WTC11 (cell line): ENCODE measurements at regions of chr1 and their contacts with region 1.

Region 1: DNA sequence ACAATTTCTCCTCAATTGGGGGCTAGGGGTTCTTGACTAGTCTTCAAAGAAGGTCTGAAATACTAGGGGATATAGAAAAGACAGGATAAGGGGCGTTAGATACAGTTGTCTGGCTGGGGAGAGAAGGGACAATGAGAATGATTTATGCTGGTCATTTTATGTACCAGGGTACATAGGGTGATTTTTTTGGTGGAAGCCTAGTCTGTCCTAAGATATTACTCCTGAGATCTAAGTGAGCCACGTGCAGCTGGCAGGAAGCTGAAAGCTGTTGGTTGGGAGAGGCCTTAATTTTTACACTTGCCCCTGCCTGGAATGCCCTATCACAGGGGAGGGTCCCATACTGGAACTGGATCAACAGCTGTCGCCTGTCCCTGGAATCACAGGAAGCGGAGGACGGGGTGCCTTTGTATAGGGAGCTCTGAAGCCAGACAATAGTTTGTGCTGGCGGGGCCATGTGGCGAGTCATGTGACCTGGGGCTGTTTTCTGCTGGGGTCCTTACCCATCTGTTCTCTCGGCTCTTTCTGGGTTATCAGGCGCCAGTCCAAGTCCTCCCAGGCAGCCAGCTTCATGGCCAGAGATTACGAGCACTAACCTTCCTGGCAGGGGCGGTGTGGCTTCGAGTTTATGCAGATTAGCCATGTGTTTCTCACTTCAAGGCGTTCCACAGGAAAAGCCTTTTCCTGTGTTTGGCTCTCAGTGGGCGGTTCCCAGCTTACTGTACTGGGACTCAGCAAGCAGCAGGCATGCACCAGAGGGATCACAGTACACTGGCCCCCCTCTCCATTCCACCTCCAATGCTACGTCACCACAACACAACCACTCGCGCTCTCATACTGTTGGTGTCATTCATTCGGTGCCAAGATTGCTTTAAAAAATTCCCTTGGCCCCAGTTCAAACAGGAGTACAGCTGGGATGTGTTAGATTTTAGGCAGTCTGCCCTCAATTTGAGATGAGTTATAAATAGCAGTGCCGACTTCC is 27.5 kb downstream of the ARID1A start:
- DNase-seq: peak; percentile 72
- ATAC-seq: peak; percentile 80
- H3K4me3 Mint-ChIP-seq: peak overlapping the region; percentile 59
- H3K27ac Mint-ChIP-seq: peak overlapping the region; percentile 78
- H3K4me1 Mint-ChIP-seq: peaks cover 82% of the 10 kb centered on the region
- H3K27me3 Mint-ChIP-seq: no peaks in the 10 kb centered on the region
- CTCF ChIP-seq: no peak

Region 2: DNA sequence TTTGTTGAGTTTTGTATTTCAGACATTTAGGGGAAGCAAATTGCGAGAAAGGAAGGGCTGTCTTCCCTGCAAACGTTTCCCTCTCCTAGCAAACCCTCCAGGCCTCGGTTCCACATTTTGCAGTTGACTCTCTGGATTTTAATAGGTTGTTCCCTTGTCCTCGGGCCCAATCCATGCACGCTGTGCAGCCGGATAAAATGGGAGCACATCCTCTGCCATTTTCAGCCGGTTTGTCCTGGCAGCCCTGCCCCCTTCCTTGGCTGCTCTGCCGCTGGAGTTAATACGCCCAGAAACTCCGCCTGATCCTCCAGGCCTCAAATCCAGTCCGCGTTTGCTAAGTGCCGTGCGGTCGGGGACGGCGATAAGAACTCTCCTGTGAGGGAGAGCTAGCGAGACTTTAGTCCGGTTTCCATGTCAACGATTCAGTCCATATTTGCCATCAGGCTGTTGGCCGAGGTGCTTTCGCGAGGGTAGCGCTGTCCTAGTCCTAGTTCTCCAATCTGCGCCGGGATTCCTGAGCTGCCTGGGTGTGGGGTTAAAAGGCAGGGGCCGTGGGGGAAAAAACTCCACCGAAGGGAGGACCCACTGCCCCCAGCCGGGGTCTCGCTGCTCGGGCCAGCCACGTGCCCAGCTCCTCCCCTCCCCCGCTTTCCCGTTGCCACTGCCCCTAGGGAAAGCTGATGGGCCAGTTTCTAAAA is 30.4 kb before region 1 on chr1:
- CTCF ChIA-PET with region 1: interaction called, 7 read pairs
- POLR2A ChIA-PET with region 1: interaction called, 17 read pairs
- DNase-seq: peak; percentile 93
- ATAC-seq: peak; percentile 65
- H3K4me3 Mint-ChIP-seq: peak overlapping the region; percentile 86
- H3K27ac Mint-ChIP-seq: peak overlapping the region; percentile 100
- H3K4me1 Mint-ChIP-seq: peaks cover 34% of the 10 kb centered on the region
- H3K27me3 Mint-ChIP-seq: no peaks in the 10 kb centered on the region
- CTCF ChIP-seq: no peak

Region 3: GRCh38 chr1:26697978-26698849 is 25.1 kb before region 1 on chr1:
- CTCF ChIA-PET with region 1: interaction called, 7 read pairs
- POLR2A ChIA-PET with region 1: interaction called, 17 read pairs
- DNase-seq: peak; percentile 22
- ATAC-seq: no peak; the same call in none of the 2 replicates
- H3K4me3 Mint-ChIP-seq: no peak overlapping the region
- H3K27ac Mint-ChIP-seq: no peak overlapping the region
- H3K4me1 Mint-ChIP-seq: peaks cover 17% of the 10 kb centered on the region
- H3K27me3 Mint-ChIP-seq: no peaks in the 10 kb centered on the region
- CTCF ChIP-seq: no peak

Region 4: GRCh38 chr1:26864610-26865527 is 141.6 kb after region 1 on chr1:
- CTCF ChIA-PET with region 1: no interaction called
- POLR2A ChIA-PET with region 1: no interaction called
- DNase-seq: peak; percentile 98
- ATAC-seq: peak; percentile 87
- H3K4me3 Mint-ChIP-seq: peak overlapping the region; percentile 94
- H3K27ac Mint-ChIP-seq: peak overlapping the region; percentile 96
- H3K4me1 Mint-ChIP-seq: peaks cover 50% of the 10 kb centered on the region
- H3K27me3 Mint-ChIP-seq: peaks cover 16% of the 10 kb centered on the region
- CTCF ChIP-seq: no peak